ENCODE measurements at regions of chr6 and their contacts with region 1.

Region 1: DNA sequence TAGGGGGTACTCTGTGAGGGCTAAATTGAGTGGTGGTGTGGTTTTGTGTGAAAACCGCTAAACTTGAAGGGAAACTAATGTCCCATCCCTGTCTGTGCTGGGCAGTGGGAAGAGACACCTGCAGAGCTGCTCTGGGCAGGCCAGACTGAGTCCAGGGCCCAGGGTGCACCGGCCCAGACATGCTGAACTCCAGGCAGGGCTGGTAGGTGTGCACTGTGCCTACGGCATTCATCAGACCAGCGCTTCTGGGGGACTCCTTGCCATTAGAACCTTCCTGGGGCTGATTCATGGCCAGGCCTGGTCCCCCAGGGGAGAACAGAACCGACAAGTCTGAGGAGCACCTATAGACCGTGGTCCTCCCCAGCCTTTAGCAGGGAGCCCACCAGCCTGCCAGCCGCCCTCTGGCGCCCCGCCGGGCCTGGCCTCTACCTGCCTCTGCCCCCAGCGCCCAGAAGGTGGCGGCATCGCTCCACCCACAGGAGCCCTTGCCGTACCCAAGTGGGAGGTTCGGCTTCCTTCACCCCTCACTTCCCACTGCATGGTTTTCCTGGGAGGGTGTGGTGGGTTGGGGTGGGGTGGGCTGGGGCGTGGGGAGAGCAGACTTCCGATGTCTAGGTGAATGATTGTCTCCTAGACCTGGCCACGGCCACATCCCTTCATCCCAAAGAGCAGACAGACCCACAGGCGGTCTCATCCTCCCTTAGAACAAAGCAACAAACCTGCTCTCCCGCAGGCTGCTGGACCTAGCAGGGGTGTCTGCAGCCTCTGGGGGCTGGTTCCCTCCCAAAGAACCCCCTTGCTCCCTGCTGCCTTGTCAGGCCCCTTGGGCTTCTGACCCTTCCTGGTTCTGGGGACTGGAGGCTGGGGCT is 15.5 kb downstream of the CCDC167 start:
- DNase-seq: peak; percentile 33
- H3K4me3 ChIP-seq: no peak overlapping the region
- H3K27ac ChIP-seq: no peak overlapping the region
- H3K4me1 ChIP-seq: no peaks in the 10 kb centered on the region
- H3K27me3 ChIP-seq: no peaks in the 10 kb centered on the region
- CTCF ChIP-seq: peak; percentile 65 to 91
- POLR2A ChIP-seq: no peak

Region 2: GRCh38 chr6:37653933-37654565 is 169.9 kb after region 1 on chr6:
- CTCF ChIA-PET with region 1: interaction called, 4 read pairs
- POLR2A ChIA-PET with region 1: no interaction called
- dilution Hi-C with region 1: no loop called
- intact Hi-C with region 1: loop called (anchors 5 kb)
- DNase-seq: peak; percentile 47
- H3K4me3 ChIP-seq: no peak overlapping the region
- H3K27ac ChIP-seq: no peak overlapping the region
- H3K4me1 ChIP-seq: no peaks in the 10 kb centered on the region
- H3K27me3 ChIP-seq: peaks cover 8 to 22% of the 10 kb centered on the region in 2 experiments
- CTCF ChIP-seq: peak; percentile 54 to 77
- POLR2A ChIP-seq: no peak

Measured in endothelial cell of umbilical vein (primary cell).